Prostate gland (tissue), 2 donors: ENCODE measurements at regions of chr18 and their contacts with region 1.

Region 1: DNA sequence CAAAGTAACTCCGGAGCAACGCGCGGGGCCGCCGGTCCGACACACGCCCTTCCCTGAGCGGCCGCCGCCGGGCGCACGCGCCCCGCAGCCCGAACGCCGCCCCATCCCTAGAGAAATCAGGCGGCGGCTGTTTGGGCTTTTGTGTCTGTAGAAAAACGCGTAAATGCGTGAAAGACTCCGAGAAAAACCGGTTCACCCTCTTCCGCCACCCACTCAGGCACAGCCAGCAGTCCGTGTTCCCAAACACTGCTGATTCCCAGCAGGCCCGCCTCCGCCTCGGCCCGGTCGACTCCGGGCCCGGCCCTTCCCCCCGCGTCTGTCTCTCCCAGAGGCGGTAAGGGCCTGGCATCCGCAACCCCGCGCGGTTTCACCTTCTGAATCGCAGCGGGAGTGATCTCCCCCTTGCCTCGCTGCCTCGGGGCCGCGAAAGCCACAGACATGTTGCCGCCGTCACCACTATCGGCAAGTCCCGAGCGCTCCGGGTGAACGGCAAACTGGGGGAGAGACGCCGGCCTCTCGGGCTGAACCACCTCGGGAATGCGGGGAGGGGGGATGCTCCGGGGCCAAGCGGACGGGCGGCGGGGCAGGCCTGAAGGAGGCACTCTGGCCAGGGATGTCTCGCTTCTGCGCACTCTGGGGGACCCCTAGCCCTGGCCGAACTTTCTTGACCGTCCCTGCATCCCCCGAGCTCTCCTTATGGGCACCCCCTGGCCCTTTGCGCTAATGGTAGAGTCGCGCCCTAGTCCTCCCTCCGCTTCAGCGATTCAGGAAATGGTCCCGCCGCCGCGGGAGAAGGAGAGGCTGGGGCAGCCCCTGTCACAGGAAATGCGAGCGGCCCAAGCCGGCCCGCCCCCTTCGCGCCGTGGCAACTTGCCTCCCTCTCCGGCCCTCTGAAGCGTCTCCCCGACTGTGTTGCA is at the start of gene SS18:
- DNase-seq: peak; percentile 92
- H3K4me3 ChIP-seq: peak within 1 kb of the TSS; percentile 73 to 78
- H3K27ac ChIP-seq: peak within 1 kb of the TSS; percentile 92 to 94
- H3K4me1 ChIP-seq: no peaks in the 10 kb centered on the region
- H3K27me3 ChIP-seq: no peaks in the 10 kb centered on the region
- CTCF ChIP-seq: no peak
- POLR2A ChIP-seq: peak; percentile 43
- total RNA-seq, gene SS18: 94.7 to 158 TPM

Region 2: GRCh38 chr18:25827961-25828561 is 262.3 kb before region 1 on chr18:
- intact Hi-C with region 1: no loop called
- DNase-seq: no peak
- H3K4me3 ChIP-seq: no peak overlapping the region
- H3K27ac ChIP-seq: no peak overlapping the region
- H3K4me1 ChIP-seq: no peaks in the 10 kb centered on the region
- H3K27me3 ChIP-seq: no peaks in the 10 kb centered on the region
- CTCF ChIP-seq: no peak
- POLR2A ChIP-seq: no peak

Region 3: DNA sequence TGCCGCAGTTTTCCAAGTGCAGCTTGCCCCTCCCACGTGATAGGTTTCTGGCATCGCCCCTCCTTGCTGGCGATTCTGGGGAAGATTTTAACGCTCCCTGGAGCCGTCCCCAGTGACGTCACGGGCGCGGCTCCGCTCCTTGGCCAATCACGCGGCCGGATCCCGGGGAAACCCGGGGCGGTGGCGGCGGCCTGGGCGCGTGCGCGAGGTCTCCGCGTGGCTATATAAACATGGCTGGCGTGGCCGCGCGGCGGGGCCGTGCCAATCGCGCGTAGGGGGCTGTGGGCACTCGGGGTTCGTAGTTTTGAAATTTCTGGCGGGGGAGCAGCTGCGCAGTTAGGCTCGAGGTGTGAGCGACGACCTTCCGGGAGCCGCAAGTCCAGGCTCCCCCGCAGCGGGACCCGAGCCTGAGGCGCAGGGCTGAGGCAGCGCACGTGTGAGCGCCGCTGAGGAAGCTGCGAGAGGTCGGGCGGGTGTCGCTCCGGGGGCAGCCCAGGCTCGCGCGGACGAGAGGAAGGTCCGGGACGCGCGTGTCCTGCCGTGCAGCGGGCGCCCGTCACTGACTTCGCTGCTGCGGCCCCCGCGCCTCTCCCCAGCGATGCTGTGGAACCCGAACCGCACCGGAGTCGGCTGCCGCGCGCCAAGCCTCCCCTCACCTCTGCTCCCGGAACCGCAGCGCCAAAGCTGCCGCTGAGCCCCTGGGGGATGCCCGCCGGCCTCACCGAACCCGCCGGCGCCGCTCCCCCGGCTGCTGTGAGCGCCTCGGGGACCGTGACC is 136.0 kb after region 1 on chr18 and contains the start of gene TAF4B:
- intact Hi-C with region 1: loop called (anchors 2 kb)
- DNase-seq: peak; percentile 93
- H3K4me3 ChIP-seq: peak within 1 kb of the TSS; percentile 77 to 82
- H3K27ac ChIP-seq: peak within 1 kb of the TSS; percentile 68 to 71
- H3K4me1 ChIP-seq: peaks cover 4% of the 10 kb centered on the region
- H3K27me3 ChIP-seq: no peaks in the 10 kb centered on the region
- CTCF ChIP-seq: no peak
- POLR2A ChIP-seq: peak; percentile 88
- total RNA-seq, gene TAF4B: 5.3 to 37.3 TPM

Region 4: GRCh38 chr18:26286008-26286407 is 195.6 kb after region 1 on chr18:
- intact Hi-C with region 1: no loop called
- DNase-seq: no peak
- H3K4me3 ChIP-seq: no peak overlapping the region
- H3K27ac ChIP-seq: no peak overlapping the region
- H3K4me1 ChIP-seq: no peaks in the 10 kb centered on the region
- H3K27me3 ChIP-seq: no peaks in the 10 kb centered on the region
- CTCF ChIP-seq: no peak
- POLR2A ChIP-seq: no peak

Region 5: GRCh38 chr18:26458526-26459232 is 368.3 kb after region 1 on chr18:
- intact Hi-C with region 1: loop called (anchors 10 kb)
- DNase-seq: no peak
- H3K4me3 ChIP-seq: no peak overlapping the region
- H3K27ac ChIP-seq: no peak overlapping the region
- H3K4me1 ChIP-seq: no peaks in the 10 kb centered on the region
- H3K27me3 ChIP-seq: no peaks in the 10 kb centered on the region
- CTCF ChIP-seq: no peak
- POLR2A ChIP-seq: no peak